ENCODE measurements at regions of chr17 and their contacts with region 1.

Region 1: GRCh38 chr17:77444984-77445759 is 304.4 kb downstream of the SEC14L1 start:
- DNase-seq: peak; percentile 90
- ATAC-seq: peak; percentile 52
- H3K4me3 Mint-ChIP-seq: peak overlapping the region; percentile 62
- H3K27ac Mint-ChIP-seq: peak overlapping the region; percentile 95
- H3K4me1 Mint-ChIP-seq: peaks cover 97% of the 10 kb centered on the region
- H3K27me3 Mint-ChIP-seq: no peaks in the 10 kb centered on the region

Region 2: DNA sequence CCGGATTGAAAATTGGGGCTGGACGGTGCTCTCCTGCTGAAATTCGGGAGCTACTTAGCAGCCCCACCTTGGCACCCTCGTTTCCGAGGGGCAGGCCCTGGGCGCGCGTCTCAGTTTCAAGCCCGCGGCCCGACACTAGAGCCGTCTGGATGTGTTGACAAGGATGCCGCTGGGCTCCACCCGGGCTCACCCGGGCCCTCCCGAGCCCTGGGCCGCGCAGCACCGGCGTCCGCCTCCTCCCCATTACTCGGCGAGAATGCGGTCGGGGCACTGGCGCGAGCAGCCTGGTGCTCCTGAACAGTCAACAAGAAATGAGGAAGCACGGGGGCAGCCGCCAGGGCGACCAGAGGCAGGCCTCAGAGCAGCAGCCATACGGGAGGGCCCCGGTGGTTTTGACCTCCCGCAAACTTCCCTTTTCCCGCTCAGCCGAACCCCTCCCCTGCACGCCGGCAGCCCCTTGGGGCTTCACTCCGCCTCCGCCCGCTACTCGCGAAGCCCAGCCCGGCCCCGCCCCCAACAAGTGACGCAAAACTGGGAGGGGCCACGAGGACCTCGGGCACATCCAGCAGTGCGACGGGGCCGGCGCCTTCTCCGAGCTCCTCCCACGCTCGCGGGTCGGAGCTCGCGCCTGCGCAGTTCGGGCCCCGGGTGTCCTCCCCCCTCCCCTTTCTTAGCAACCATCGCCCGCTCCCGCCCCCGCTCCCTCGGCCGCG is 304.9 kb before region 1 on chr17:
- CTCF ChIA-PET with region 1: no interaction called
- POLR2A ChIA-PET with region 1: no interaction called
- intact Hi-C with region 1: no loop called
- DNase-seq: peak; percentile 100
- ATAC-seq: peak; percentile 79
- H3K4me3 Mint-ChIP-seq: peak overlapping the region; percentile 68
- H3K27ac Mint-ChIP-seq: peak overlapping the region; percentile 93
- H3K4me1 Mint-ChIP-seq: peaks cover 51% of the 10 kb centered on the region
- H3K27me3 Mint-ChIP-seq: no peaks in the 10 kb centered on the region

Region 3: GRCh38 chr17:77372444-77373298 is 72.5 kb before region 1 on chr17:
- CTCF ChIA-PET with region 1: no interaction called
- POLR2A ChIA-PET with region 1: no interaction called
- intact Hi-C with region 1: loop called in 1 of 2 experiments (anchors 2 kb)
- DNase-seq: peak; percentile 78
- ATAC-seq: peak; percentile 17
- H3K4me3 Mint-ChIP-seq: peak overlapping the region; percentile 67
- H3K27ac Mint-ChIP-seq: peak overlapping the region; percentile 74
- H3K4me1 Mint-ChIP-seq: peaks cover 61% of the 10 kb centered on the region
- H3K27me3 Mint-ChIP-seq: no peaks in the 10 kb centered on the region

Region 4: DNA sequence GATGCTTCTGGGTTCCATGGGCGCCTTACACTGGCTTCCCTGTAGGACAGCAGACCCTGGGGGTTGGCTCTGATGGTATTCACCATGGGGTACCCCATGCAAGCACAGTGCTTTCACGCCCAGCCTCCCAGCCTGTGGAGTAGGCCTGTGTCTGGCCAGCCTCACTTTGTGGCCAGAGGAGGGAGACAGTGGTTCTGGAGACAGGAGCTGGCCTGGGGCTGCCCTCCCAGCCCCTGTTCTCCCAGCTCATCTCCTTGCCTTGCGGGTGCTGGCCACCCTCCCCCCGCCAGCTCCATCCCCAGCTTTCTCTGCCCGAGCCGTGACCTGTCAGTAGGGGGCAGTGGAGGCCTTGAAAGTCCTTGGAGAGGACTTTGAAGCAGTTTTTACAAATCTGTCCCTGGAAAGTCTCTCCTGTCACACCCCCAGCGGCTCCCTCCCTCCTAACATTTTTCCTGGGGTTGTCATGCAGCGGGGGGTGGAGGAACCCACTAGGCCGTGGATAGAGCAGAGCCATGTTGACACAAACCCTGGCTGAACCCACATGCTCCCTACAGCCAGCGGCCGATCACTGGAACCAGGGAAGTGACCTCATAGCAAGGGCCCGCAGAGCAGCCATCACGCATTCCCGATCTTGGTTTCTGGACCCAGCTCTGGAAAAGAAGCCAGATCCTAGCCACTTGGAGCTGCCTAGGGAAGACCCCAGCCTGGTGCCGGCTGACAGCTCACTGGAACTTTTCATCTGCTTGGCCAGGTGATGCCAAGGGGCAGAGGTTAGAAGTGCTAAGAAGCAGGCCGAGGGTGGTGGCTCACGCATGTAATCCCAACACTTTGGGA is 15.0 kb before region 1 on chr17:
- CTCF ChIA-PET with region 1: interaction called, 27 read pairs
- POLR2A ChIA-PET with region 1: interaction called, 14 read pairs
- intact Hi-C with region 1: loop called in 1 of 2 experiments (anchors 2 kb)
- DNase-seq: peak; percentile 92
- ATAC-seq: peak; percentile 47
- H3K4me3 Mint-ChIP-seq: no peak overlapping the region
- H3K27ac Mint-ChIP-seq: peak overlapping the region; percentile 13
- H3K4me1 Mint-ChIP-seq: peaks cover 91% of the 10 kb centered on the region
- H3K27me3 Mint-ChIP-seq: no peaks in the 10 kb centered on the region

Region 5: DNA sequence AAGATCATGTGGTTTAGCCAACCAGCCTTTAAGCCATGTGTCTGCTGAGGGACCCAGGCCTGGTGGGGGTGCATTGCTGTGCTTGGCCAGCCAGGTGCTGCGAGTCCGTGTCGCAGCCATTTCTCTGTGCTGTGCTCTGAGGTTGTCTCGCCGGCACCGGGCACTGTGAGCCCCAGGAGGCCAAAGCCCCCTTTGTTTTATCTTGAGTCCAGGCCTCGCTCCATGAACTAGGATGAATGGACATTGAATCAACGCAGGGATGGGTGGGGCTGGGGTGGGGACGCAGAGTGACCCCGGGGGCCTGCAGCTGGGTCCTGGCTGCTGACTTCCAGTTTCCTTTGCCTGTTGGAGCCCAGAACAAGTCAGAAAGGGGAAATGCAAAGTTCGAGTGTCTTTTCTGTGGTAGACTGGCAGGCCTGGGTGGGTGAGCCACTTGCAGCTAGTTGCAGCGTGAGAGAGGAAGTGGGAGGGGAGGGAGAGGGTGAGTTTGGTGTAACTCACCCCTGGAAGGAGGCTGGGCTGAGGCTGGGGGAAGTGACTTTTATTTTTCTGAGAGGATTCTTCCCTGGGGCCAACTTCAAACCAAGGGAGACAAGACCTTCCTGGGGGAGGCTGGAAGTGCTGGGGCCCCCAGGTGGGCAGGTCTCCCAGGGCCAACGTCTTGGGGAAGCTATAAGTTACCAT is 20.3 kb after region 1 on chr17:
- CTCF ChIA-PET with region 1: interaction called, 8 read pairs
- POLR2A ChIA-PET with region 1: interaction called, 13 read pairs
- intact Hi-C with region 1: loop called in 1 of 2 experiments (anchors 1 kb)
- DNase-seq: peak; percentile 90
- ATAC-seq: peak; percentile 83
- H3K4me3 Mint-ChIP-seq: peak overlapping the region; percentile 62
- H3K27ac Mint-ChIP-seq: peak overlapping the region; percentile 98
- H3K4me1 Mint-ChIP-seq: peaks cover 90% of the 10 kb centered on the region
- H3K27me3 Mint-ChIP-seq: no peaks in the 10 kb centered on the region

Region 6: DNA sequence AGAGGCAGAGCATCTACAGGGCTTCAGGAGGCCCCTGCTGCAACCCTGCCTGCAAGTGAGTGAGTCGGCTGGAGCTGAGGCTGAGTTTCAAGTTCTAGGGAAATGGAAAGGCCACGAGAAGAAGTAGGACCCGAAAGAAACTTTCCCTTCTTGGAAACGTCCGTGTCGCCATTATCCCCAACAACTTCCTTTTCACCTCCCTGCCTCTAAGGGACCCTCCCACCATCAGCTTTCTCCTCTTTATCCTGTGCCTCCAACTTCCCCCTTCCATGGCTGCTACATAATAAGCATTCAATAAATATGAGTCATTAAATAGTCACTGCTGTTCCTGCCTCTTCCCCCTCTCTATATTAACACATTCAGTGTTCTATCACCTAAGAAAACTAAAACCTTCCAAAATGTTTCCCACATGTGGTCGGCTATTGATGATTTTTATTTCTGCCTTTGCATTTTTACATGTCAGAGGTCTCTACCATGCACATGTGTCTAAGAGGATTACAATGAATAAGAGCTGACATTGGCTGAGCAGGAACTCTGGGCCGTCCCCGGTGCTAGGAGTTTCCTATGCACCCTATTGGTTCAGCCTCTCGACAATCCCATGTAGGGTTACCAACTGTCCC is 397.5 kb after region 1 on chr17:
- CTCF ChIA-PET with region 1: no interaction called
- POLR2A ChIA-PET with region 1: no interaction called
- intact Hi-C with region 1: loop called in 1 of 2 experiments (anchors 2 kb)
- DNase-seq: peak; percentile 65
- ATAC-seq: peak; percentile 63
- H3K4me3 Mint-ChIP-seq: peak overlapping the region; percentile 0
- H3K27ac Mint-ChIP-seq: peak overlapping the region; percentile 32
- H3K4me1 Mint-ChIP-seq: peaks cover 49% of the 10 kb centered on the region
- H3K27me3 Mint-ChIP-seq: peaks cover 5% of the 10 kb centered on the region

Measured in activated CD4-positive, alpha-beta T cell treated with anti-CD3 and anti-CD28 coated beads for 36 hours (primary cell).